ENCODE measurements at regions of chr4 and their contacts with region 1.

Region 1: DNA sequence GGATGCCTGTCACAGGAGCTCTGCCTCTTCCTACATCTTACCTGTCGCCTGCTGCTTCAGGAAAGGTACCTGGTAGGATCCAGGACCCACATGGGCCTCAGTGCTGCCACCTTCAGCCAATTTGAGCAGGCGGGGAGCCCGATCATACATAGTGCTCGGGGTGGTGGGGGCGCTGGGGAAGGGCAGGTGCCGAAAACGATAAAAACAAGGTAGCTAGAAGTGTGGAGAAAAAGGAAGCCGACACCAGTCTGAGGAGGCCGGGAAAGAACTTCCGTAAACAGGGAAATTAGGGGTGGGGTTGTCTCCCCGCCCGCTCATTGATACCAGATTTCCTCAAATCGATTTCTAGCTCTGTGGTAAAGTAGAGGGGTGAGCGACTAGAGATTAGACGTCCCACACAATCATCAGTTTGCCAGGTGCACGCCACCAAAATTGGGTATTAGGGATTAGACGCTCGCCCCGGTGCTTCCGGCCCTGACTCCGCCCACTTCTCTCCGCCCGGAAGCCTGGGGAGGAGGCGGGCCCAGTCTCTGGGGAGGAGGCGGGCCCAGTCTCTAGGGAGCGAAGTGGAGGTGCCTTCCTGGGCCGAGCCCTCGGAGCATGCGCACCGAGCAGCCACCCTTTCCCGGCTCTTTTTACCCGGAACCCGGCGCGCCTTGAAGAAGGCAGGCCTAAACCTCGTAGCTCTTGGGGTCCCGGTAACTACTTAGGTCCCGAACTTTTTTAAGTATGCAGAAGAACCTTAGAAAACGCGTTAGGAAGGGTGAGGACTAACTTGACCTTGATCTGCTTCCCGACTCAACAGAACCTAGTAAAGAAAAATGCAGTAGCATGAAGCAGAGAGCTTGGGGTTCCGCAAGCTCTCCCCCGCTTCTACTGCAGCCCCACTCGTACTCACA is at the start of gene STPG2:
- DNase-seq: peak; percentile 97
- ATAC-seq: peak; percentile 98
- H3K4me3 ChIP-seq: peak within 1 kb of the TSS; percentile 69 to 86 (median 84)
- H3K4me3 Mint-ChIP-seq: peak within 1 kb of the TSS; percentile 94
- H3K27ac ChIP-seq: peak within 1 kb of the TSS; percentile 91 to 93
- H3K27ac Mint-ChIP-seq: peak within 1 kb of the TSS; percentile 96
- H3K4me1 ChIP-seq: peaks cover 15 to 18% of the 10 kb centered on the region in 2 donors
- H3K4me1 Mint-ChIP-seq: peaks cover 24% of the 10 kb centered on the region
- H3K27me3 ChIP-seq: no peaks in the 10 kb centered on the region
- H3K27me3 Mint-ChIP-seq: no peaks in the 10 kb centered on the region
- CTCF ChIP-seq: peak; percentile 77
- total RNA-seq, gene STPG2: 0.41 and 0.49 TPM in 2 replicates

Region 2: DNA sequence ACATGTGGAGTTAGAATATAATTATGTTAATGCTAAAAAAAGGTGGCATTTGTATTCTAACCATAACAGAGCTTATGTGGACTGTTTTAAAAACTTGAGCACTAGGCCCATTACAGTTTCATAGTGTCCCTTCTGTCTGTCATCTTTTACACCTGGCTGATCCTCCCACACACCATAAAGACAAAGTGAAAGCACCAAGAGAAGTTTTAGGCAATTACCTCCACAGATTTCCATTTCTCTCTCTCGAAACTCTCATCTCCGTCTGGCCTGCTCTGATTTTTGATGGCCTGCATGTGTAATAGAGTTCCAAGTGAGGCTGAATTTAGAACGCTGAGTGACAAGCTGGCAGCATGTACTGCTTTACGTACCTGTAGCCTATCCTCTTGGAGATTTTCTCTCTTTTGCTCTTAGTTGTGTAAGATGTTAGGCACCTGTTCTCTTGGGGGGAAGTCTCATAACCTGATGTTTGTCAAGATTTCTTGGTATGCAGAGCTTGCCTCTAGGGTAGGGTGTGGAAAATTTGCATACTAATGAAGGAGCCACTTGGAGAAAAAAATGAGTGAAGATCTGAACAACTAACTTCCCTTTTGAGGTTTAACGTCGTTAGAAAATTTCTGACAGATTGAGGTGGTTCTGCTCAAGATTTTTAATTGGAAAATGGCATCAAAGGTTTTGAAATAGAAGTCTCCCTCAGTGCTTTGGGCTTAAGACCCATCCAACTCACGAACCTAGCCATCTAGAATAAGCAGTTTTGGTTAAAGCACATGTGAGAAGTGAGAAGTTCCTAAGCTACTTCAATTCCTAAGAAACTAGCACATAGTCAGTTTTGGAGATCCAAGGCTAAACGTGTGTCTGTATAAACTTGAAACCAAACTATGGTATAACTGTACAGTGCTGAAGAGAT is 60.3 kb after region 1 on chr4:
- CTCF ChIA-PET with region 1: interaction called, 8 read pairs
- POLR2A ChIA-PET with region 1: interaction called, 5 read pairs
- intact Hi-C with region 1: loop called (anchors 1 kb)
- DNase-seq: peak; percentile 75
- ATAC-seq: peak; percentile 89
- H3K4me3 ChIP-seq: peak overlapping the region; percentile 32 to 64 (median 53)
- H3K4me3 Mint-ChIP-seq: peak overlapping the region; percentile 89
- H3K27ac ChIP-seq: peak overlapping the region; percentile 74 to 86
- H3K27ac Mint-ChIP-seq: peak overlapping the region; percentile 97
- H3K4me1 ChIP-seq: peaks cover 27% of the 10 kb centered on the region in 2 donors
- H3K4me1 Mint-ChIP-seq: peaks cover 35% of the 10 kb centered on the region
- H3K27me3 ChIP-seq: no peaks in the 10 kb centered on the region
- H3K27me3 Mint-ChIP-seq: no peaks in the 10 kb centered on the region
- CTCF ChIP-seq: no peak

Region 3: GRCh38 chr4:98446499-98447375 is 303.5 kb after region 1 on chr4:
- CTCF ChIA-PET with region 1: no interaction called
- POLR2A ChIA-PET with region 1: no interaction called
- intact Hi-C with region 1: loop called (anchors 2 kb)
- DNase-seq: peak; percentile 75
- ATAC-seq: peak; percentile 72
- H3K4me3 ChIP-seq: peak overlapping the region in 4 of 5 experiments; percentile 32 to 53 (median 48)
- H3K4me3 Mint-ChIP-seq: peak overlapping the region; percentile 75
- H3K27ac ChIP-seq: peak overlapping the region; percentile 69 to 70
- H3K27ac Mint-ChIP-seq: peak overlapping the region; percentile 93
- H3K4me1 ChIP-seq: peaks cover 35 to 42% of the 10 kb centered on the region in 2 donors
- H3K4me1 Mint-ChIP-seq: peaks cover 45% of the 10 kb centered on the region
- H3K27me3 ChIP-seq: no peaks in the 10 kb centered on the region
- H3K27me3 Mint-ChIP-seq: no peaks in the 10 kb centered on the region
- CTCF ChIP-seq: no peak

Region 4: GRCh38 chr4:98658287-98659105 is 515.2 kb after region 1 on chr4 and contains the start of gene TSPAN5:
- CTCF ChIA-PET with region 1: no interaction called
- POLR2A ChIA-PET with region 1: no interaction called
- intact Hi-C with region 1: loop called (anchors 1 kb)
- DNase-seq: peak; percentile 89
- ATAC-seq: peak; percentile 84
- H3K4me3 ChIP-seq: peak within 1 kb of the TSS; percentile 34 to 92 (median 81)
- H3K4me3 Mint-ChIP-seq: peak within 1 kb of the TSS; percentile 89
- H3K27ac ChIP-seq: peak within 1 kb of the TSS; percentile 37 to 74
- H3K27ac Mint-ChIP-seq: peak within 1 kb of the TSS; percentile 75
- H3K4me1 ChIP-seq: peaks cover 27 to 33% of the 10 kb centered on the region in 2 donors
- H3K4me1 Mint-ChIP-seq: peaks cover 52% of the 10 kb centered on the region
- H3K27me3 ChIP-seq: peaks cover 0 to 10% (median 1%) of the 10 kb centered on the region in 4 experiments
- H3K27me3 Mint-ChIP-seq: peaks cover 8% of the 10 kb centered on the region
- CTCF ChIP-seq: no peak
- total RNA-seq, gene TSPAN5: 5.3 TPM in 2 replicates

Region 5: DNA sequence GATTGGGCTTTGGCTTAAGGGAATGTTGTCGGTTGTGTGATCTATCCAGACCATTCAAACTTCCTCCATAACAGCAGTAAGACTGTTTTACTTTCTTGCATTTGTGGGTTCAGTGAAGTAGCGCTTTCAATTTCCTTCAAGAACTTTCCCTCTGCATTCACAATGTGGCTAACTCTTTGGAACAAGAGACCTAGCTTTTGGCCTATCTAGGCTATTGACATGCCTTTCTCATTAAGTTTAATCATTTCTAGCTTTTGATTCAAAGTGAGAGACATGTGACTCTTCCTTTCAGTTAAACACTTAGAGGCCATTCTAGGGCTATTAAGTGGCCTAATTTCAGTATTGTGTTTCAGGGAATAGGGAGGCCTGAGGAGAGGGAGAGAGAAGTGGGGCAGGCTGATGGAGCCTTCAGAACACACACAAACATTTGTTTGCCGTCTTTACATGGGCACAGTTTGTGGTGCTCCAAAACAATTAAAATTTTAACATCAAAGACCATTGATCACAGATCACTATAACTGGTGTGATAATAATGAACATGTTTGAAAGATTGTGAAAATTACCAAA is 911.3 kb after region 1 on chr4:
- CTCF ChIA-PET with region 1: interaction called, 60 read pairs
- POLR2A ChIA-PET with region 1: no interaction called
- intact Hi-C with region 1: loop called (anchors 2 kb)
- DNase-seq: no peak
- ATAC-seq: no peak
- H3K4me3 ChIP-seq: no peak overlapping the region
- H3K4me3 Mint-ChIP-seq: no peak overlapping the region
- H3K27ac ChIP-seq: no peak overlapping the region
- H3K27ac Mint-ChIP-seq: peak overlapping the region; percentile 46
- H3K4me1 ChIP-seq: no peaks in the 10 kb centered on the region
- H3K4me1 Mint-ChIP-seq: peaks cover 14% of the 10 kb centered on the region
- H3K27me3 ChIP-seq: no peaks in the 10 kb centered on the region
- H3K27me3 Mint-ChIP-seq: no peaks in the 10 kb centered on the region
- CTCF ChIP-seq: no peak

Region 6: GRCh38 chr4:99088481-99089365 is 945.5 kb after region 1 on chr4 and contains the start of gene ADH5:
- CTCF ChIA-PET with region 1: interaction called, 6 read pairs
- POLR2A ChIA-PET with region 1: interaction called, 3 read pairs
- intact Hi-C with region 1: loop called (anchors 1 kb)
- DNase-seq: peak; percentile 90
- ATAC-seq: peak; percentile 95
- H3K4me3 ChIP-seq: peak within 1 kb of the TSS; percentile 75 to 99 (median 96)
- H3K4me3 Mint-ChIP-seq: peak within 1 kb of the TSS; percentile 98
- H3K27ac ChIP-seq: peak within 1 kb of the TSS; percentile 84
- H3K27ac Mint-ChIP-seq: peak within 1 kb of the TSS; percentile 98
- H3K4me1 ChIP-seq: peaks cover 15 to 25% of the 10 kb centered on the region in 2 donors
- H3K4me1 Mint-ChIP-seq: peaks cover 46% of the 10 kb centered on the region
- H3K27me3 ChIP-seq: no peaks in the 10 kb centered on the region
- H3K27me3 Mint-ChIP-seq: no peaks in the 10 kb centered on the region
- CTCF ChIP-seq: no peak
- total RNA-seq, gene ADH5: 59.2 and 65.6 TPM in 2 replicates

Region 7: DNA sequence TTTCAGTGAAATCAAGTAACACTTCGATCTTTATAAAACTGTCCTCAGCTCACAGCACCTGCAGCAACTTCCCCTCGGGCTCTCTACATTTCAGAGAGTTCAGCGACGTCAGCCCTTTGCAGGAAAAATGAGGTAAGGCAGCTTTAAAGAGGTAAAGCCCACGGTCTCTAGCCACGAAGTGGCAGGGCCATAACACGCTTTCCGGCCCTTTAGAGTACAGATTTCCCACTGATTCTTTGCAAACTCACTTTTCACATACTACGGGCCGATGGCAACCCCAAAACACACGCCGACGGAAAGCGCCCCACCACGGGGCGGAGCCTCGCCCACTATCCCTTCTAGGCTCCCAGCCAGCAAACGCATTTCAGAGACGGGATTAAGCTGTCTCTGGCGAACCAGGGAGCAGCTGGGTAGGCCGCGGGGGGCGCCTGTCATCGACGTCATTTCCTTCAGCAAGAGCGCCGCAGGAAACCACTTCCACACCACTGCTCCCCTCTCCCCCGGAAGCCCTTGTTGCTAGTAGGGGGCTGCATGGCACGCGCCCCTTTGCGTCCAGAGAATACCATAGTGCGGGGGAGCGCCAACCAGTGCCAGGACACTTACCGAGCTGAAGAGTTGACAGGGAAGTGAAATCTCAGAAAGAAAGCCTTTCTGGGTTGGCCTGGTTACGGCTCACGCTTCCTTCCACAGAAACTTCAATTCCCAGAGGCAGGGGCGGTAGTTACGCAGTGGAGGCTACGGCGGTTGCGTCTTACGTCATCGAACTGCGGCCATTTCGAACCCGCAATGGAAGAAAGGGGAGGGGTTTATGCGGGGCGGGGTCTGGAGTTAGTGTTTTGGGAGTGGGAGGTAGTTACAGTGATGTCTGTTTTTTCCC is 1420.3 kb after region 1 on chr4 and contains the start of gene TRMT10A:
- CTCF ChIA-PET with region 1: no interaction called
- POLR2A ChIA-PET with region 1: no interaction called
- intact Hi-C with region 1: loop called (anchors 5 kb)
- DNase-seq: peak; percentile 98
- ATAC-seq: peak; percentile 84
- H3K4me3 ChIP-seq: peak within 1 kb of the TSS; percentile 73 to 92 (median 80)
- H3K4me3 Mint-ChIP-seq: peak within 1 kb of the TSS; percentile 99
- H3K27ac ChIP-seq: peak within 1 kb of the TSS; percentile 96
- H3K27ac Mint-ChIP-seq: peak within 1 kb of the TSS; percentile 100
- H3K4me1 ChIP-seq: peaks cover 4 to 9% of the 10 kb centered on the region in 2 donors
- H3K4me1 Mint-ChIP-seq: peaks cover 18% of the 10 kb centered on the region
- H3K27me3 ChIP-seq: peaks cover 0 to 9% (median 2%) of the 10 kb centered on the region in 4 experiments
- H3K27me3 Mint-ChIP-seq: peaks cover 24% of the 10 kb centered on the region
- CTCF ChIP-seq: no peak
- total RNA-seq, gene TRMT10A: 4.5 and 5.5 TPM in 2 replicates